ENCODE measurements at regions of chr12 and their contacts with region 1.

Region 1: GRCh38 chr12:126747530-126748149 is 1519.3 kb upstream of the TMEM132C start:
- DNase-seq: peak; percentile 17 to 43
- ATAC-seq: peak in 1 of 8 donors; percentile 55
- H3K4me3 ChIP-seq: no peak overlapping the region
- H3K27ac ChIP-seq: no peak overlapping the region
- H3K4me1 ChIP-seq: no peaks in the 10 kb centered on the region
- H3K27me3 ChIP-seq: peaks cover 0 to 15% (median 3%) of the 10 kb centered on the region in 7 donors
- CTCF ChIP-seq: peak; percentile 77 to 94 (median 89)

Region 2: DNA sequence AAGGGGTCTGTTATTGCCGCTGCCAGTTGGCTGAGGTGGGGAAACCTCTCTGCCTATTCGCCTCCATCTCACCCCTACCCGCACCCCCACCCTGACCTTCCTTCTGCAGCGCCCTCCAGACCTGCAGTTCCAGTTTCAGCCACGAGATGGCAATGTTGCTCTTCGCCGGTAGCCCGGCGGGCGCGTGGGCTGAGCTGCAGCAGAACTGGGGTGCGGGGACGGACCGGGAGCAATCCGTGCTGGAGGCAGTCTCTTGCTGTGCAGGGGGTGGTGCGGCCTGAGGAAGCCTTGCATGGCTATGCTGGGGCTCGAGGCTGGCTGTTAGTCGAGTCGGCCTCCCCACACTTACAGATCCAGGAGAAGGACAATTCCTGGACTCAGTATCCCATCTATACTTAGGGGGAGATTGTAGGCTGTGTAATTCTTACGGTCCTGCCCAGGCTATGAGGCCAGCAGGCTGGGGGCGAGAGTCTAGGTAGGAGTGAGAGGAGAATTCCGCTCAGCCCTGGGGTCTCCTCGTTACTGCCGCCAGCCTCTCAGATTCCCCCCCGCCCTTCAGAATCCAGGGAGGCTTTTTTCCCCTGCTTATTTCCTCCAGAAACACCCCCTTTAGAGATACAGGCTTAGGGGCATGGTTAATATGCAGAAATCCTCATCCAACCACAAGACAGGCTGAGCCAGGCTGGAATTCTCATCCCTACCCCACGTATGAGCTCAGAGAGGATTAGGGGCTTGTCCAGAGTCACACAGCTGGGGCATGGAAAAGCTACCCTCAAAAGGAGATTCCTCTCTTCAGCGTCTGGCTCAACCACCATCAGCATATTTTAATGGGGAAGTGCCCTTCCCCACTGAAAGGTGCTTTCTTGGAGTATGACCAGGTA is 1564.2 kb before region 1 on chr12:
- intact Hi-C with region 1: loop called in 5 of 10 experiments (anchors 5 to 10 kb)
- DNase-seq: peak; percentile 67 to 78
- ATAC-seq: peak; percentile 50 to 84 (median 73)
- H3K4me3 ChIP-seq: no peak overlapping the region
- H3K27ac ChIP-seq: no peak overlapping the region
- H3K4me1 ChIP-seq: peaks cover 3 to 30% (median 11%) of the 10 kb centered on the region in 9 donors
- H3K27me3 ChIP-seq: peaks cover 7 to 72% (median 46%) of the 10 kb centered on the region in 7 donors
- CTCF ChIP-seq: peak; percentile 92 to 100 (median 99)

Region 3: DNA sequence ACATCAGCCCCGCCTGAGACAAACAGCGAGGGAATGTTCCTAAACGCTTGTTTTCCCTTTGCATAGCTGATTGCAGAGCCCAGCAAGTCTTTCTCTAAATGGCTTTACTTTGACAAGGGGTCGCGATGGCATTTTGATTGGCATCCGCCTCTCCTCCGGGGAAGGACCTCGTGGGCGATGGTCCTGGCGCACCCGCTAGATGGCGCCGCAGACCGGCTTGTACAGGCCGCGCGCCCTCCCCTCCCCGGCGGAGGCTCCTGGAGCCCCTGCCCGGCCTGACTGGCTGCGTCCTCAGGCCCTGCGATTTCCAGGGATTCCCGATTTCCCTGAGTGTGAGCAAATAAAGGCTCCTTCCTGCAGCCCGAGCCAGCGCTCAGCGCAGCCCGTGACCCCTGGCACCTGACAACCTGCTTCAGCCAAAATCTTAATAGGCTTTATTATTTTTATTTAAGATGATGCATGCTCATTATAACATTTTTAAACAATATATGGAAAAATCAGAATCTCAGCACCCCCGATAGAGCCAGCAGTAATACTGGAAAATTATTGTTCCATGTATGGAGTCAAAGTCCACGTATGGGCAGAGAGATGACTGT is 1214.1 kb before region 1 on chr12:
- intact Hi-C with region 1: loop called in 6 of 10 experiments (anchors 2 to 10 kb)
- DNase-seq: peak; percentile 5 to 19
- ATAC-seq: peak in 4 of 8 donors; percentile 38 to 86 (median 54)
- H3K4me3 ChIP-seq: no peak overlapping the region
- H3K27ac ChIP-seq: no peak overlapping the region
- H3K4me1 ChIP-seq: no peaks in the 10 kb centered on the region
- H3K27me3 ChIP-seq: peaks cover 0 to 52% (median 25%) of the 10 kb centered on the region in 7 donors
- CTCF ChIP-seq: peak; percentile 21 to 75 (median 67)

Region 4: DNA sequence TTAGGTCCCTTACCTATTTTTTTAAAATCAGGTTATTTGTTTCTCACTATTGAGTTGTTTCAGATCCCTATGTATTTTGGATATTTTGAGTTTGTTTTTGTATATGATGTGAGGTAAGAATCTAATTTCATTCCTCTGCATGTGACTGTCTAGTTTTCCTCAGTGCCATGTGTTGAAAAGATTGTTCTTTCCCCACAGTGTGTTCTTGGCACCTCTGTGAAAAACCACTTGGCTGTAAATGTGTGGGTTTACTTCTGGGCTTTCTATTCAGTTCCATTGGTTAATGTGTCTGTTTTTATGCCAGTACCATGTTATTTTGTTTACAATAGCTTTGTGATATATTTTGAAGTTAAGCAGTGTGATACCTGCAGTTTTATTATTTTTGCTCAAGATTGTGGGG is 166.0 kb before region 1 on chr12:
- intact Hi-C with region 1: no loop called
- DNase-seq: no peak
- ATAC-seq: no peak
- H3K4me3 ChIP-seq: no peak overlapping the region
- H3K27ac ChIP-seq: no peak overlapping the region
- H3K4me1 ChIP-seq: no peaks in the 10 kb centered on the region
- H3K27me3 ChIP-seq: no peaks in the 10 kb centered on the region
- CTCF ChIP-seq: no peak

Region 5: DNA sequence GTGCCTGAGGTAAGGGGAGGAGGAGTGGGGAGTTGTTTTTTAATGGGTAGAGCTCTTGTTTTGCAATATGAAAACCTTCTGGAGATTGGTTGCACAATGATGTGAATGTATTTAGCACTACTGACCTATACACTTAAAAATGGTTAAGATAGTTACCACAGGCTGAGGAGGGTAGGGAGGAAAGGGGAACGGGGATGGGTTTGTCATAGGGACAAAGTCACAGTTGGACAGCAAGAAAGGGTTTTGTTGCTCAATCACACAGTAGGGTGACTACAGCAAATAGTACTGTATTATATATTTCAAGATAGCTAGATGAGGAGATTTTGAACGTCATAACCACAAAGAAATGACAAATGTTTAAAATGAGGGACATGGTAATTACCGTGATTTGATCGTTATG is 120.0 kb before region 1 on chr12:
- intact Hi-C with region 1: no loop called
- DNase-seq: no peak
- ATAC-seq: no peak
- H3K4me3 ChIP-seq: no peak overlapping the region
- H3K27ac ChIP-seq: no peak overlapping the region
- H3K4me1 ChIP-seq: no peaks in the 10 kb centered on the region
- H3K27me3 ChIP-seq: peaks cover 0 to 4% (median 0%) of the 10 kb centered on the region in 7 donors
- CTCF ChIP-seq: no peak